T-cell (primary cell): ENCODE measurements at regions of chr6 and their contacts with region 1.

Region 1: DNA sequence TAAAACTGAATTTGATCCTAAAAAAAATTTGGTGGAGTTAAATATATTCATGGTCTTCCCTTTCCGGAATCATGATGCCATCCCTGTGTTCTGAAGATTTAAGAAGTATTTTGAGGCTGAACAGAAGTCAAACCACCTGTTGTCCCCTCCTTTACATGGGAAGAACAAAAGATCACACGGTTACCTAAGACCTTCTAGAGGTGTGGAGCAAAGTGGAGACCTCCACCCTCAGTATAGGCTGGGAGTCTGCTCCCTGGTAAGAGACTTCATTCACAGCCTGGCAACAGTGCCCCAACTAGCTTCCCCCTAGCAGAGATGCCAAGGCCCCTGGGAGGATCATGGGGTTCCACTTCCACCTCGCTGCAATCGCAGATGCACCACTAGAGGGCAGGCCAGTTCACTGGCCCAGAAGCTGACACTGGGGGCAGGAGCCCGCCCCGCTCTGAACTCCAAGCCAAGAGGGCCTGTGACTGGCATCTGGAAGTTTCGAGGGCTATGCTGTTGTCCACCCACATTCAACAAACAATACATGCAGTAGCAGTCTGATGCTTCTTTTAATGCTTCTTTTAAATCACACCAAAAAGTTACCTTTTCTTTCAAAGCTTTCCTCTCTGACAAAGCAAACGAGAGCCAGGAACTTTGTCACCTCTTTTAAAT is 19.5 kb upstream of the UBE2J1 start:
- DNase-seq: peak; percentile 54 to 86 (median 74)
- ATAC-seq: peak; percentile 68 to 88 (median 85)
- H3K4me3 ChIP-seq: no peak overlapping the region
- H3K4me3 Mint-ChIP-seq: no peak overlapping the region
- H3K27ac ChIP-seq: peak overlapping the region; percentile 17
- H3K27ac Mint-ChIP-seq: peak overlapping the region; percentile 55 to 74
- H3K4me1 ChIP-seq: peaks cover 10 to 18% of the 10 kb centered on the region in 2 experiments
- H3K4me1 Mint-ChIP-seq: peaks cover 20 to 25% (median 24%) of the 10 kb centered on the region in 3 donors
- H3K27me3 ChIP-seq: no peaks in the 10 kb centered on the region
- H3K27me3 Mint-ChIP-seq: no peaks in the 10 kb centered on the region

Region 2: DNA sequence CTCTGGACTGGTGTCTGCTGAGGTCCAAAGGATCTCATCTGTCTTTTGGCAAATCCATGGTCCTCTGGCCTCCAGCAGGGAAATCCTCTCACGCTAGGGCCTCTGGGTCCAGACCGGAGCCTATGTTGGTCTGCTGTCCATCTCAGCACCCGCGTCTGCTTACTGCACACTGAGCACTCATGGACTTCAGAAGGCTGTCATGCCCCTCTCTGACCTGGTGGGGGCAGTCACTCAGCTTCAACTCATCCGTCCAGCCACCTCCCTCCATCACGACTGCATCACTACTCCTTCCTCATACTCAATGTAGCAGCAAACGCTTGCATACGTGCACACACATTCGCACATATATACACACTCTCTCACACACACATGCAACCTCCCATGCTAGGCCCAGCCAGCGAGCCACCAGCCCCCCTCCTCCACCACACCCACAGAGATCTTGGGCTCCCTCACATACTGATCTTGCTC is 90.2 kb before region 1 on chr6:
- CTCF ChIA-PET with region 1: no interaction called
- POLR2A ChIA-PET with region 1: no interaction called
- DNase-seq: peak in 19 of 35 experiments; percentile 4 to 60 (median 17)
- ATAC-seq: peak in 1 of 4 experiments; percentile 20
- H3K4me3 ChIP-seq: no peak overlapping the region
- H3K4me3 Mint-ChIP-seq: no peak overlapping the region
- H3K27ac ChIP-seq: no peak overlapping the region
- H3K27ac Mint-ChIP-seq: no peak overlapping the region
- H3K4me1 ChIP-seq: no peaks in the 10 kb centered on the region
- H3K4me1 Mint-ChIP-seq: peaks cover 0 to 2% (median 0%) of the 10 kb centered on the region in 3 donors
- H3K27me3 ChIP-seq: peaks cover 0 to 5% of the 10 kb centered on the region in 2 experiments
- H3K27me3 Mint-ChIP-seq: no peaks in the 10 kb centered on the region

Region 3: DNA sequence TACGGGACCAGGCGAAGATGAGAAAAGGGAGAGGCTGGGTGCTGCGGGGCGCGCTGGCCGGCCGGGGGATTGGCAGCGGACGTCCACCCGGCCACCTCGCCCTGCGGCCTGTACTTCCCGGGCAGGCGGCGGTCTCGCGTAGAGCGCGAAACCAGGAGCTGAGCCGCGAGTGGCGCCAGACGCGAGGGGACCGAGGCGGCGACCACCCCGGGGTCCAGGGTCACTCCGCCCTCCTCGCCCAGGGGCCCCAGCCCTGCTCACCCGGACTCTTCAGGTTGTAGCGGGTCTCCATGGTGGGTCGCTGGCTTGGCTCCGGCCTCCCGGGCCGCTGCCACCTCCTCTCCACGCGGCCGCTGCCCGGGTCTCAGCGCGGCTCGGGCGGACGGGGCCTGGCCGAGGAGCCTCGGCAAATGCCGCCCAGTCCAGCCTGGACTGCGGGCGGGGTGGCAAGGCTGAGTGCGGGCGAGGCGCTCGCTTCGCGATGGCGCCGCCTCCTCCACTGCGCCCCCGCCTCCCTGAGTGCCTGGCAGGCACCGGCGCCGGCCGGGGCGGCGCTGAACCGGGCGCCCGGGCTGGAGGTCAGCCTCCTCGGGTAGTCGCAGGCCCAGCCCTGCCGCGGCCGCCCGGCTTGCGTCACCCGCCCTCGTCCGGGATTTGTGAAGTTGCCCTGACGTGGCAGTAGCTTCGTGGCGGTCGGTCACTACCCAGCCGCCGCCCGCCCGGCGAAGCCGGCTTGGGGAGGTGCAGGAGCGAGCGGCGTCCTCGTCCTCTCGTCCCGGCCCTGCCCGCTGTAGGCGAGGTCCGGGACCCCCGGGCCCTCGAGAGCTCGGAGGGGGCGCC is 19.5 kb before region 1 on chr6 and contains the start of gene UBE2J1:
- CTCF ChIA-PET with region 1: interaction called, 17 to 34 read pairs
- POLR2A ChIA-PET with region 1: interaction called, 3 read pairs
- DNase-seq: peak; percentile 34 to 80 (median 60)
- ATAC-seq: peak; percentile 79 to 87 (median 85)
- H3K4me3 ChIP-seq: peak within 1 kb of the TSS; percentile 66 to 92
- H3K4me3 Mint-ChIP-seq: peak within 1 kb of the TSS; percentile 94 to 99 (median 96)
- H3K27ac ChIP-seq: peak within 1 kb of the TSS; percentile 71
- H3K27ac Mint-ChIP-seq: peak within 1 kb of the TSS; percentile 97 to 98
- H3K4me1 ChIP-seq: peaks cover 24 to 36% of the 10 kb centered on the region in 2 experiments
- H3K4me1 Mint-ChIP-seq: peaks cover 69 to 76% (median 71%) of the 10 kb centered on the region in 3 donors
- H3K27me3 ChIP-seq: no peaks in the 10 kb centered on the region
- H3K27me3 Mint-ChIP-seq: no peaks in the 10 kb centered on the region
- total RNA-seq, gene UBE2J1: 14.6 to 24.1 (median 22.6) TPM

Region 4: DNA sequence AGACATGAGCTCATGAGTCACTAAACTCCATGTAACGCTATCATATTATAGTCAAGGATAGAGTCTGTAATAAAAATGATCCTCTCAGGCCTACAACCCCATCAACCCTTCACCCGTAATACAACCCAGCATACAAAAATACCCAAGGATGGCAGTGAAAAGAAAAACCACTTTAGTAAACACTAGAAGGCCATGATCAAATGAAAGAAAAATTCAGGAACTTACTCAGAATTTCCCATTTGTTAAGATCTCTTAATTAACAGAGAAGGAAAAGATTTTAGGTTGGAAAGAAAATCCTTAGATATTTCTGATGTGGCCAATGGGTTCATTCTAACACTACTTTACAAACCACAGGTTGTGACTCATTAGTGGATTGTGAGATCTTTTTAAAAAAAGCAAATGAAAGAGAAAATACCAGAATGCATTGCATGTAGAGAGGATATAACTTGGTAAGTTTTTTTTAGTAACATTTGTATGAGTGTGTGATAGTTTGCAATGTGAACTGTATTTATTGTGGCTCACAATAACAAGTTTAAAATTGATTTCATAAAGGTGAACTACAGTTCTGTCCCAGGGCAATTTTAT is 11.5 kb before region 1 on chr6:
- CTCF ChIA-PET with region 1: interaction called, 21 to 34 read pairs
- POLR2A ChIA-PET with region 1: no interaction called
- DNase-seq: peak in 1 of 35 experiments; percentile 24
- ATAC-seq: peak; percentile 42 to 77 (median 70)
- H3K4me3 ChIP-seq: no peak overlapping the region
- H3K4me3 Mint-ChIP-seq: no peak overlapping the region
- H3K27ac ChIP-seq: no peak overlapping the region
- H3K27ac Mint-ChIP-seq: peak overlapping the region in 1 of 2 donors; percentile 2
- H3K4me1 ChIP-seq: peaks cover 0 to 29% of the 10 kb centered on the region in 2 experiments
- H3K4me1 Mint-ChIP-seq: peaks cover 45 to 65% (median 52%) of the 10 kb centered on the region in 3 donors
- H3K27me3 ChIP-seq: no peaks in the 10 kb centered on the region
- H3K27me3 Mint-ChIP-seq: no peaks in the 10 kb centered on the region

Region 5: GRCh38 chr6:89412071-89413005 is 40.4 kb after region 1 on chr6 and contains the start of gene RRAGD:
- CTCF ChIA-PET with region 1: interaction called, 4 to 20 read pairs
- POLR2A ChIA-PET with region 1: interaction called, 3 to 8 read pairs
- DNase-seq: peak in 34 of 35 experiments; percentile 11 to 70 (median 38)
- ATAC-seq: peak; percentile 78 to 85 (median 81)
- H3K4me3 ChIP-seq: peak within 1 kb of the TSS; percentile 70 to 71
- H3K4me3 Mint-ChIP-seq: peak within 1 kb of the TSS; percentile 87 to 95 (median 93)
- H3K27ac ChIP-seq: peak within 1 kb of the TSS; percentile 19
- H3K27ac Mint-ChIP-seq: peak within 1 kb of the TSS in 1 of 2 donors; percentile 69
- H3K4me1 ChIP-seq: peaks cover 7 to 20% of the 10 kb centered on the region in 2 experiments
- H3K4me1 Mint-ChIP-seq: peaks cover 20 to 22% (median 21%) of the 10 kb centered on the region in 3 donors
- H3K27me3 ChIP-seq: peaks cover 0 to 29% of the 10 kb centered on the region in 2 experiments
- H3K27me3 Mint-ChIP-seq: peaks cover 6 to 26% of the 10 kb centered on the region in 2 donors
- total RNA-seq, gene RRAGD: 2.3 to 4.9 (median 4.6) TPM

Region 6: DNA sequence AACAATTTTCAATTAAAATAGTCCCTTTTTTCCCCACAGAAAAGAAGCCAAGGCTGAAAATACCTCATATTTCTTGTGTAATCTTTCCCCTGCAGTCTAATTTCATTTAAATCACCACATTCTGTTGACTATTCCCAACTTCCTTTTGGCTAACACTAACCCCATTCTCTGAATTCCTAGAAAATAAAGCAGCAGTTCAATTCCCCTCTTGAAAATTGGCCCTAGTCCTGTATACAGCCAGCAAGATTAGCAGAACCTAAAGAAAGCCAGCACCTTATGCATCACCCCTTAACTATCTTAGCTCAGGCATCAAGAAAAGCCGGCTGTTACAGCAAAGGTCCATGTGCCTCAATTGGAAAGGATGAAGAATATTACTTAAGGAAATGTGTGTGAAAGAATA is 377.9 kb after region 1 on chr6:
- CTCF ChIA-PET with region 1: no interaction called
- POLR2A ChIA-PET with region 1: no interaction called
- DNase-seq: no peak
- ATAC-seq: no peak
- H3K4me3 ChIP-seq: no peak overlapping the region
- H3K4me3 Mint-ChIP-seq: no peak overlapping the region
- H3K27ac ChIP-seq: no peak overlapping the region
- H3K27ac Mint-ChIP-seq: no peak overlapping the region
- H3K4me1 ChIP-seq: no peaks in the 10 kb centered on the region
- H3K4me1 Mint-ChIP-seq: no peaks in the 10 kb centered on the region
- H3K27me3 ChIP-seq: no peaks in the 10 kb centered on the region
- H3K27me3 Mint-ChIP-seq: no peaks in the 10 kb centered on the region

Region 7: DNA sequence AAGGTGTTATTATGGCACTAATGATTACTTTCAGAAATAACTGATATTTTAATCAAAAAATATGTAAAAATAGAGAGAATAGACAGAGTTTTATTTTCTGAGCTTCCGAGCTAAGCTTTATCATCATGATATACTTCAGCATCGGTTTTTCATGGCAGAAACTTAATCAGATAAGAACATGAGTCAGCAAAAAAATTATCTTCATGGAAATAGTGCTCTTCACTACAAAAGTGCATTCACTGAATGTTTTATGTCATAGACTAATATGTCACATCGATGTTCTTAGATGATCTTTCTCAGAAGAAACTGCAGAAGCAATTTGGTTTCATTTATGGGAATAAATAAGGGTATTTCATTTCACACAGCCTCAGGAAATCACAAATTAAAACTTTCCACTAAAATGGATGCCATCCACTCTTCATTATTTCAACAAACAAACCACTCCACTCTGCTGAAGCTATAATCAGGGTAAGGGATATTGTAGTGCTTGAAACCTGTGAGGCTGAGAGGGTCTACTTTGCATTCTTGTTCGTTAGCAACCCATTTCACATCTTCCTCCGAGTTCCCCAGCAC is 1225.1 kb after region 1 on chr6:
- CTCF ChIA-PET with region 1: no interaction called
- POLR2A ChIA-PET with region 1: no interaction called
- DNase-seq: no peak
- ATAC-seq: no peak
- H3K4me3 ChIP-seq: no peak overlapping the region
- H3K4me3 Mint-ChIP-seq: no peak overlapping the region
- H3K27ac ChIP-seq: no peak overlapping the region
- H3K27ac Mint-ChIP-seq: no peak overlapping the region
- H3K4me1 ChIP-seq: no peaks in the 10 kb centered on the region
- H3K4me1 Mint-ChIP-seq: no peaks in the 10 kb centered on the region
- H3K27me3 ChIP-seq: peaks cover 5 to 11% of the 10 kb centered on the region in 2 experiments
- H3K27me3 Mint-ChIP-seq: peaks cover 39 to 45% of the 10 kb centered on the region in 2 donors